WTC11 (cell line): ENCODE measurements at regions of chr12 and their contacts with region 1.

Region 1: GRCh38 chr12:49309391-49309790 is 13.7 kb upstream of the TROAP start:
- DNase-seq: no peak
- ATAC-seq: no peak
- H3K4me3 Mint-ChIP-seq: no peak overlapping the region
- H3K27ac Mint-ChIP-seq: no peak overlapping the region
- H3K4me1 Mint-ChIP-seq: no peaks in the 10 kb centered on the region
- H3K27me3 Mint-ChIP-seq: peaks cover 45% of the 10 kb centered on the region
- CTCF ChIP-seq: no peak

Region 2: DNA sequence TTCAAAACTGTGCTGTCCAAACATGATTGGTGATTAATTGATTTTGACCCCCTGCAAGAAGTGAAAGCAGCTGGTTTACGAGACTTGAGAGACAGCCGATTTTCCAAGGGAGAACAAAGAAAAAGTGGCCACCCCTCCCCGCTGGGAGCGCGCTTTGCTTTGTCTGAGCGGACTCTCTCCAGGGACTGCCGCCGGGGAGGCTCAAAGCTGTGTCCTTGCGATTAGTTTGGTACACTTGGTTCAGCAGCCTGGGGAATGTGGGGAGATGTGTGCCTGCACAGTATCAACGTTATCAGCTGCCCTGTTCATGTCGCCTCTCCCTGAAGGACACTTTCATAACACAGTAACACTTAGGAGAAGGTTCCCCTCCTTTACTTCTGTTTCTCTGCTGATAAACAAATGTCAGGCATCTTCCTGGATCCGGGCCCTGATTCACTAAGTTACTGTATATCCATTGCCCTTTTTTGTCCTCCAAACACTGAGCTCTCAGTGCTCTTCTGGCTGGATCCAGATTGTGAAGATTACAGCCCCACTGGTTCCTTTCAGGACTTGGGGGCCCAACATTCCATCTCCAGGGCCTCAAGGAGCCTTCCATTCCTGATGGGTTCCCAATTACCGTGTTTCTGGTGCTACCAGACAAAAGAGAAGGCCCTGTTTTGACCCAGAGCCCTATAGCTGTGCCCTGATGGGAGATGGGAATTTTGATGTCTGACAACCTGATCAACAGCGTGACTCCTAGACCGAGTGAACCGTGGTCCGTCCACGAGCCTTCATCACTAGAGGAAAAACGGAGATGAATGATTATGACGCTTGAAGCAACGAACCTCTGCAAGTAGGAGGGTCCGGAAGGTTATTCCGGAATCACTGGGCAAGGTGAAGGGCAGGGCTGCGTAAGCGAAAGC is 76.2 kb before region 1 on chr12:
- CTCF ChIA-PET with region 1: no interaction called
- POLR2A ChIA-PET with region 1: no interaction called
- DNase-seq: peak; percentile 62
- ATAC-seq: peak; percentile 34
- H3K4me3 Mint-ChIP-seq: peak overlapping the region; percentile 38
- H3K27ac Mint-ChIP-seq: no peak overlapping the region
- H3K4me1 Mint-ChIP-seq: peaks cover 27% of the 10 kb centered on the region
- H3K27me3 Mint-ChIP-seq: peaks cover 6% of the 10 kb centered on the region; the same call in 1 of the 2 replicates
- CTCF ChIP-seq: no peak

Region 3: DNA sequence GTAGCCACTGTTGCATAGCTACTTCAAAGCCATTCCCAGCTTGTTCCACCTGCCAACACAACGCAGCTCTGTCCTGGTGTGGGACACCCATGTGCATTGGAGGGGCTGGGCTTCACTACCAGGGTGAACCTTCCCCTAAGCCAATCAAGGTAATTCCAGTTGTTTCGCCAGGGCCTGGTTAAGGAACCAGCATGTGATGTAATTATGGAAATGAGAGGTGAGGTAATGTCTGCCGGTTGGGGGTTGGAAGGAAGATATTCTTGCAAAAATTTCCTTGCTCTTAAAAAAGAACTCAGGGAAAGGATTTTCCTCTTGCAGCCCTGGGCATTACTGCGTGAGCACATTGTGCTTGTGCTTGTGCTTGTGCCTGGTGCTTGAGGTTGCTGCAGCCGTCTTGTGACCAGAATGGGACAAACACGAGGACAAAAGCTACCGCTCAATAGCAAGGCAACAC is 29.7 kb before region 1 on chr12:
- CTCF ChIA-PET with region 1: interaction called, 10 read pairs
- POLR2A ChIA-PET with region 1: no interaction called
- DNase-seq: no peak
- ATAC-seq: peak; percentile 53
- H3K4me3 Mint-ChIP-seq: no peak overlapping the region
- H3K27ac Mint-ChIP-seq: no peak overlapping the region
- H3K4me1 Mint-ChIP-seq: peaks cover 23% of the 10 kb centered on the region
- H3K27me3 Mint-ChIP-seq: no peaks in the 10 kb centered on the region
- CTCF ChIP-seq: no peak